ENCODE measurements at regions of chr18 and their contacts with region 1.

Region 1: DNA sequence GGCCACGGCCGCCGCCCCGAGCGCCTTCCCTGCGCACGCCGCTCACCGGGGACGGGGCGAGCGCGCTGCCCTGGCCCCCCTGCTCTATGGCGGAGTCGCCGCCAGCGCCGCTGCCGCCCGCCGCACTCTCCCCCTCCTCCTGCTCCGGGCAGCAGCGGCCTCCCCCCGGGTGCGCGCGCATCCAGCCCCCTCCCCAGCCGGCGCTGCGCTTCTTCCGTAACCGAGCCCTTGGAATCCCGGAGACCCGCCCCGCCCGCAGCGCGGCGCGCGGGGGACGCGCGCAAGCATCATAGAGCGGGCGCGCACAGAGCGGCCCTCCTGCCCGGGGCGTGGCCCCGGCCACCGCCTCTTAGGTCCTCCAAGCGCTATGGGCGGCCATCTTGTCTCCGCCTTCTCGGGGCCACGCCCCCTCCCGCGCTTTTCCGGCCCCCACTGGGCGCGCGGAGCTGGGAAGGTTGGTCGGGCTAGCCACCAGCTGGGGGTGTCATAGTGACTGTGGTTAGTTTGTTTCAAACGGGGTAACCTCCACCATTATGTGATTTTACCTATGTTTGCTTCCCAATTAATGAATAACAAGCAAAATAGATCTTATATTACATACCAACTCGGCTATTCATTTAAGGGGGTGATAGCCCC is at the start of gene MBD2:
- DNase-seq: peak; percentile 96
- ATAC-seq: peak; percentile 92
- H3K4me3 ChIP-seq: peak within 1 kb of the TSS; percentile 41 to 71 (median 62)
- H3K4me3 Mint-ChIP-seq: peak within 1 kb of the TSS; percentile 92
- H3K27ac ChIP-seq: peak within 1 kb of the TSS; percentile 39 to 73
- H3K27ac Mint-ChIP-seq: peak within 1 kb of the TSS; percentile 99
- H3K4me1 ChIP-seq: peaks cover 40 to 48% of the 10 kb centered on the region in 2 donors
- H3K4me1 Mint-ChIP-seq: peaks cover 45% of the 10 kb centered on the region
- H3K27me3 ChIP-seq: no peaks in the 10 kb centered on the region
- H3K27me3 Mint-ChIP-seq: no peaks in the 10 kb centered on the region
- CTCF ChIP-seq: peak; percentile 14
- total RNA-seq, gene MBD2: 131 and 134 TPM in 2 replicates

Region 2: GRCh38 chr18:54209471-54210180 is 14.9 kb before region 1 on chr18:
- CTCF ChIA-PET with region 1: interaction called, 14 read pairs
- POLR2A ChIA-PET with region 1: interaction called, 3 read pairs
- intact Hi-C with region 1: no loop called
- DNase-seq: peak; percentile 18
- ATAC-seq: peak; percentile 43
- H3K4me3 ChIP-seq: no peak overlapping the region
- H3K4me3 Mint-ChIP-seq: peak overlapping the region; percentile 63
- H3K27ac ChIP-seq: peak overlapping the region in 1 of 2 donors; percentile 47
- H3K27ac Mint-ChIP-seq: peak overlapping the region; percentile 69
- H3K4me1 ChIP-seq: peaks cover 25 to 30% of the 10 kb centered on the region in 2 donors
- H3K4me1 Mint-ChIP-seq: peaks cover 56% of the 10 kb centered on the region
- H3K27me3 ChIP-seq: no peaks in the 10 kb centered on the region
- H3K27me3 Mint-ChIP-seq: no peaks in the 10 kb centered on the region
- CTCF ChIP-seq: no peak

Region 3: GRCh38 chr18:54247511-54248175 is 23.1 kb after region 1 on chr18:
- CTCF ChIA-PET with region 1: interaction called, 5 read pairs
- POLR2A ChIA-PET with region 1: interaction called, 9 read pairs
- intact Hi-C with region 1: loop called (anchors 1 kb)
- DNase-seq: no peak
- ATAC-seq: no peak
- H3K4me3 ChIP-seq: peak overlapping the region in 2 of 5 experiments; percentile 1 to 4
- H3K4me3 Mint-ChIP-seq: peak overlapping the region; percentile 60
- H3K27ac ChIP-seq: peak overlapping the region; percentile 70 to 76
- H3K27ac Mint-ChIP-seq: peak overlapping the region; percentile 93
- H3K4me1 ChIP-seq: peaks cover 39 to 44% of the 10 kb centered on the region in 2 donors
- H3K4me1 Mint-ChIP-seq: peaks cover 42% of the 10 kb centered on the region
- H3K27me3 ChIP-seq: no peaks in the 10 kb centered on the region
- H3K27me3 Mint-ChIP-seq: no peaks in the 10 kb centered on the region
- CTCF ChIP-seq: no peak

Region 4: DNA sequence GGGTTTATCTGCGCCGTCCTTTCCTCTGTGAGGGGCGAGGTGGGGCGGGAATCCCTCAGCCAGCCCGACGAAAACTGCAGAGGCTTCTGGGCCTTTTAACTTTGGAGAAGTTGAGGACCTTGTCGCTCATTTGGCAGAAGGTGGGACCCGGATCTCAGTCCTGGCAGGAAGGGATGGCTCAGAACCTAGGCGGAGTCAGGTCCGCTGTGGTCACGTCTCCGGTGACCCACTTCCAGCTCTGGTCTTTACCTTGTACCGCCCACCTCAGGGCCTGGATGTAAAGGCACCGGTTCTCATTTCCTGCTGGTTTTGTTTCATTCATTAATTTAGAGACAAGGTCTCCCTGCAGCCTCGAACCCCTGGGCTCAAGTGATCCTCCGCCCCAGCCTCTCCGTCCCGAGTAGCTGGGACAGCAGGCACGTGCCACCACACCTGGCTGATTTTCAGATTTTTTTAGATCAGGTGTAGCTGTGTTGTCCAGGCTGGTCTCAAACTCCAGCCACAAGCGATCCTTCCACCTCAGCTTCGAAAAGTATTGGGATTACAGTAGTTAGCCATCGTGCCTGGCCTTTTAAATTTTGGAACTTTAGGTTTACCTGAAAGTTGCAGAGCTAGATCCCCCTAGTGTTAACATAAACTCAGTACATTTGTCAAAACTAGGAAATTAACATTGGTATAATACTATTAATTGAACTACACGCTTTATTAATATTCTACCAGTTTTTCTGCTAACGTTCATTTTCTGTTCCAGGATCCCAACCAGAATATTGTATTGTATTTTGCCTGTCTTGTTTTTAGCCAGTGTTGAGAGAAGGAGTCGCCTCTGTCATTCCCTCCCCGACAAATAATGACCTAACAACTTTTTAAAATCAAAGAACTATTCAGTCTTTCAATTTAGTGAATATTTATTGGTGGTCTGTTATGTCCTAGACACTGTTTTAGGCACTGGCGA is 45.7 kb after region 1 on chr18:
- CTCF ChIA-PET with region 1: interaction called, 112 read pairs
- POLR2A ChIA-PET with region 1: interaction called, 20 read pairs
- intact Hi-C with region 1: loop called (anchors 1 kb)
- DNase-seq: peak; percentile 67
- ATAC-seq: peak; percentile 31
- H3K4me3 ChIP-seq: peak overlapping the region; percentile 74 to 89 (median 81)
- H3K4me3 Mint-ChIP-seq: peak overlapping the region; percentile 97
- H3K27ac ChIP-seq: peak overlapping the region; percentile 84 to 90
- H3K27ac Mint-ChIP-seq: peak overlapping the region; percentile 99
- H3K4me1 ChIP-seq: peaks cover 16 to 28% of the 10 kb centered on the region in 2 donors
- H3K4me1 Mint-ChIP-seq: peaks cover 31% of the 10 kb centered on the region
- H3K27me3 ChIP-seq: no peaks in the 10 kb centered on the region
- H3K27me3 Mint-ChIP-seq: no peaks in the 10 kb centered on the region
- CTCF ChIP-seq: peak; percentile 73

Region 5: DNA sequence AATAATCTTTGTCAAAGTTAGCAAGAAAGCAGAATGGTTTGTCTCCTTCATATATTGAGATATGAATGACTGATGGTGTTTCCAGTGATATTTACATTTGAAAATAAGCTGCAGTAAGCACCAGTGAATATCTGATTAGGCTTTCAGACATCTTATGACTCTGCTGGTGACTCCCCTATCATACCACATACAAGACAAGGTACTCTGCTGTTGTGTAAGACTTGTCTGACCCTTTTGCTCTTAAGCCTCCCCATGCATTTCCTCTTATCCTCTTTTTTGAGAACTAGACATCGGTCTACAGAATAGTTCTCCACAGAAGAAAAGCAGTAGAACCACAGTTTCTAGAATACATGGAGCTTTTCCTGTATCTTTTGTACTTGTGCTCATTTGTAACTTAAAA is 54.1 kb after region 1 on chr18:
- CTCF ChIA-PET with region 1: interaction called, 12 read pairs
- POLR2A ChIA-PET with region 1: no interaction called
- intact Hi-C with region 1: no loop called
- DNase-seq: no peak
- ATAC-seq: no peak
- H3K4me3 ChIP-seq: no peak overlapping the region
- H3K4me3 Mint-ChIP-seq: no peak overlapping the region
- H3K27ac ChIP-seq: no peak overlapping the region
- H3K27ac Mint-ChIP-seq: no peak overlapping the region
- H3K4me1 ChIP-seq: peaks cover 0 to 3% of the 10 kb centered on the region in 2 donors
- H3K4me1 Mint-ChIP-seq: peaks cover 13% of the 10 kb centered on the region
- H3K27me3 ChIP-seq: no peaks in the 10 kb centered on the region
- H3K27me3 Mint-ChIP-seq: no peaks in the 10 kb centered on the region
- CTCF ChIP-seq: no peak

Region 6: GRCh38 chr18:54357660-54358494 is 133.4 kb after region 1 on chr18 and contains the starts of genes C18orf54 and STARD6:
- CTCF ChIA-PET with region 1: interaction called, 12 read pairs
- POLR2A ChIA-PET with region 1: interaction called, 3 read pairs
- intact Hi-C with region 1: loop called (anchors 1 kb)
- DNase-seq: peak; percentile 95
- ATAC-seq: peak; percentile 92
- H3K4me3 ChIP-seq: peak within 1 kb of the TSS; percentile 75 to 99 (median 82)
- H3K4me3 Mint-ChIP-seq: peak within 1 kb of the TSS; percentile 92
- H3K27ac ChIP-seq: peak within 1 kb of the TSS; percentile 53 to 80
- H3K27ac Mint-ChIP-seq: peak within 1 kb of the TSS; percentile 82
- H3K4me1 ChIP-seq: peaks cover 8 to 9% of the 10 kb centered on the region in 2 donors
- H3K4me1 Mint-ChIP-seq: peaks cover 17% of the 10 kb centered on the region
- H3K27me3 ChIP-seq: no peaks in the 10 kb centered on the region
- H3K27me3 Mint-ChIP-seq: no peaks in the 10 kb centered on the region
- CTCF ChIP-seq: peak; percentile 66
- total RNA-seq, gene C18orf54: 4.7 and 4.8 TPM in 2 replicates
- total RNA-seq, gene STARD6: not detected in 2 replicates

Region 7: DNA sequence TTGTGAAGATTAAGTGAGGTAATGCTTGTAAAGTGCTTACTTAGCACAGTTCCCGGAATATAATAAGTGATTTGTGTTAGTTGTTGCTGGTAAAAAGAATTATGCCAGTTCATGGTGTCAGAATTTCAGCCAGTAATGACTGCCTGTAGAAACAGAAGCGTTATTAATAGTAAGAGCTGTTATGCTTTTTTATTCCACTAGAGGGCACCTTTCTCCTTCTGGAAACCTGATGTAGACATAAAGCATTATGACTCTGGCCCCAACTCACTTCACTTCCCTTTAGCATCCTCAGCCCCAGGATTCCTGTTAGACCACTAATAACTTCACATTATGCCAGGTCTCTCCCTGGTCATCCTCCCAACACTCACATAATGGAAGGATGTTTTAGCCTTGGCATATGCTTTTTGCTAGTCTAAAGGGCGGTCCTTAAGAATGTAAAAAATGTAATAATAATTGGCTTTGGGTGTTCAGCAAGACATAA is 168.1 kb after region 1 on chr18:
- CTCF ChIA-PET with region 1: interaction called, 12 read pairs
- POLR2A ChIA-PET with region 1: interaction called, 3 read pairs
- intact Hi-C with region 1: loop called (anchors 1 kb)
- DNase-seq: peak; percentile 74
- ATAC-seq: peak; percentile 64
- H3K4me3 ChIP-seq: no peak overlapping the region
- H3K4me3 Mint-ChIP-seq: no peak overlapping the region
- H3K27ac ChIP-seq: no peak overlapping the region
- H3K27ac Mint-ChIP-seq: no peak overlapping the region
- H3K4me1 ChIP-seq: no peaks in the 10 kb centered on the region
- H3K4me1 Mint-ChIP-seq: no peaks in the 10 kb centered on the region
- H3K27me3 ChIP-seq: no peaks in the 10 kb centered on the region
- H3K27me3 Mint-ChIP-seq: peaks cover 9% of the 10 kb centered on the region
- CTCF ChIP-seq: peak; percentile 80